Caco-2 (cell line): ENCODE measurements at regions of chr10 and their contacts with region 1.

Region 1: GRCh38 chr10:68811314-68812009 is 15.9 kb upstream of the STOX1 start:
- DNase-seq: no peak
- H3K4me3 ChIP-seq: no peak overlapping the region
- H3K4me3 Mint-ChIP-seq: no peak overlapping the region
- H3K27ac Mint-ChIP-seq: no peak overlapping the region
- H3K4me1 ChIP-seq: no peaks in the 10 kb centered on the region
- H3K4me1 Mint-ChIP-seq: no peaks in the 10 kb centered on the region
- H3K27me3 ChIP-seq: no peaks in the 10 kb centered on the region
- H3K27me3 Mint-ChIP-seq: no peaks in the 10 kb centered on the region
- CTCF ChIP-seq: no peak

Region 2: DNA sequence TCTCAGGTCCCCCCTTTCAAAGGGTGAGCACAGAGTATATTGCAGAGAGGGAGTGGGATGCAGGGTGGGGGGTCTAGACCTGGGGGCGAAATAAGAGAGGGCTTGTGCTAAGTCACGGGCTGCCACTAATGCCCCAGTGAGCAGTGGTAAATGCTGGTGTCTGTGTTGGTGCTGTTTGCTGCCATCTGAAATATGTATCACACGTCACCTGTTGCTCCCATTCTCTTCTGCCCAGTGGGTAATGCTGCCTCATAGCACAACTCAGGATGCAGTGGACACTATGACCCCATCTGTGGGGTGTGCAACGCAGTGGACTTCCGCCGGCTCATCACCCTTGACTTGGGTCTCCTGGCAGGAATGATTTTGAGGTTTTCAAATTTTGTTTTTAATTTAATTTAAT is 18.5 kb after region 1 on chr10:
- CTCF ChIA-PET with region 1: no interaction called
- POLR2A ChIA-PET with region 1: no interaction called
- intact Hi-C with region 1: no loop called
- DNase-seq: no peak
- H3K4me3 ChIP-seq: no peak overlapping the region
- H3K4me3 Mint-ChIP-seq: no peak overlapping the region
- H3K27ac Mint-ChIP-seq: no peak overlapping the region
- H3K4me1 ChIP-seq: 0 out of 2 replicates have a peak, but pooled peaks cover 11% of the 10 kb centered on the region
- H3K4me1 Mint-ChIP-seq: peaks cover 15% of the 10 kb centered on the region
- H3K27me3 ChIP-seq: no peaks in the 10 kb centered on the region
- H3K27me3 Mint-ChIP-seq: no peaks in the 10 kb centered on the region
- CTCF ChIP-seq: no peak

Region 3: DNA sequence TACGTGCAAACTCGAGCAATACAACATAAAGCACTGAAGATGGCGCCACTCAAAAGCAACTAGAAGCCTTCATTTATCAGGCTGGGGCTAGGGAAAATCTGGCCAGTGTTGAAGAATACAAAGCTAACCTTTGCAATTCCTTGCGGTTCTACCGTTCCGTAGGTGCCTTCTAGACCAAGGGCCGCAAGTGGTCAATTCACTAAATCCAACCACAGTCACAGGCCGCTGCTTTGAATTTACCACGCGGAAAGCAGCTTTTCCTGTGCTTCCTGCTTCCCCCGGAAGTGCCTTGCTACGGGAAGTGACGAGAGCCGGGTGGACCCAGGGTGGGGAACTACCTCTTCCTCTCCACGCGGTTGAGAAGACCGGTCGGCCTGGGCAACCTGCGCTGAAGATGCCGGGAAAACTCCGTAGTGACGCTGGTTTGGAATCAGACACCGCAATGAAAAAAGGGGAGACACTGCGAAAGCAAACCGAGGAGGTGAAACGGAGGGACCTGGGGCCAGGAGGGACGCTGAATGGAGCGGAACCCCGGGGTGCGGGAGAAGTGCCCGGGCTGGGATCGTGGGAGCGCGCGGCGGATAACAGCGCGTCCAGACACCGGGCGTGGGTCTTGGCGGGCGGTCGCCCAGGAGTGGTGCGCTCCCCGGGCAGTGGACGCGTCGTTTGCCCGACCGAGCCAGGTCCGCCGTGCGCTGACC is 144.5 kb after region 1 on chr10 and contains the start of gene DDX21:
- CTCF ChIA-PET with region 1: no interaction called
- POLR2A ChIA-PET with region 1: interaction called, 13 read pairs
- intact Hi-C with region 1: no loop called
- DNase-seq: peak; percentile 96 to 97
- H3K4me3 ChIP-seq: peak within 1 kb of the TSS; percentile 95
- H3K4me3 Mint-ChIP-seq: peak within 1 kb of the TSS; percentile 92
- H3K27ac Mint-ChIP-seq: peak within 1 kb of the TSS; percentile 97
- H3K4me1 ChIP-seq: peaks cover 11% of the 10 kb centered on the region
- H3K4me1 Mint-ChIP-seq: no peaks in the 10 kb centered on the region
- H3K27me3 ChIP-seq: no peaks in the 10 kb centered on the region
- H3K27me3 Mint-ChIP-seq: no peaks in the 10 kb centered on the region
- CTCF ChIP-seq: peak; percentile 88 to 96
- total RNA-seq, gene DDX21: 239 and 243 TPM in 2 replicates